ENCODE measurements at regions of chr17 and their contacts with region 1.

Region 1: GRCh38 chr17:17280613-17281549 is at the start of gene COPS3:
- DNase-seq: peak; percentile 95
- ATAC-seq: peak; percentile 87
- H3K4me3 Mint-ChIP-seq: peak within 1 kb of the TSS; percentile 80
- H3K27ac Mint-ChIP-seq: peak within 1 kb of the TSS; percentile 89
- H3K4me1 Mint-ChIP-seq: peaks cover 42% of the 10 kb centered on the region
- H3K27me3 Mint-ChIP-seq: no peaks in the 10 kb centered on the region
- CTCF ChIP-seq: no peak
- total RNA-seq, gene COPS3: 71.6 and 73.7 TPM in 2 replicates

Region 2: DNA sequence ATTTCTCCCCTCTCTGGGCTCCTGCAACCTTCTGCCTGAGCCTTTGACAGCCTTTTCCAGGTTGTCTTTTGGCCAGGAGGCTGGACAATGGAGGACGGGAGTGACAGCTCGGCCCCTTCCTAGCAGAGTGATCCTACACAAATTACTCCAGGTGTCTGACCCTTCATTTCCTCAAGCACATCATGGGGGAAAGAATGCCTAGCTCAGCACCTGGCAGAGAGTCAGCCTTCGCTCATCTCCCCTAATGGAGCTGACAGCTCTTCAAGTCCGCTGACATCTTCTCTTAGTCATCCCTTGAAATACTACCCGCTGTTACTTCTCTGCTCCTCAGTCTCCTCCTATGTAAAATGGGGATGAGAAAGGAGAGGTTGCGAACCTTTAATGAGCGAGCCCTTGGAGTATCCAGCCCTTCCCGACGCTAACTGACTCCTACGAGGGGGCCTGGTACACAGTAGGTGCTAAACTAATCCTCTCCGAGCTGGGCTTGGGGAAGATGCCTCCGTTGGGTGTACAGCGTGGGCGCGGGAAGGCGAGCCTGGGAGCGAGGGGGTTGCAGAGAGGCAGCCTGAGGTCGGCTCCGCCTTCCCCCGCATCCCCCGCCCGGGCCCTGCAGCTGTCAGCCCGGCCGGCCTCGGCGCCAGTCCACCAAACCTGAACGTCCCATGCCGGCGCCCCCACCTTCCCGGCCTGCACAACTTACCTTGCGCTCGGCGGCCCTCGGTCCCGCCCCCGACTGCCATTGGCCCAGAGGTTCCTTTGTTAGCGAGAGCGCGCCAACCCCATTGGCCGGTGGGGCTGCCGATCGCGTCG is 239.1 kb before region 1 on chr17:
- CTCF ChIA-PET with region 1: no interaction called
- POLR2A ChIA-PET with region 1: no interaction called
- intact Hi-C with region 1: loop called (anchors 2 kb)
- DNase-seq: peak; percentile 94
- ATAC-seq: peak; percentile 93
- H3K4me3 Mint-ChIP-seq: peak overlapping the region; percentile 69
- H3K27ac Mint-ChIP-seq: no peak overlapping the region
- H3K4me1 Mint-ChIP-seq: peaks cover 48% of the 10 kb centered on the region
- H3K27me3 Mint-ChIP-seq: no peaks in the 10 kb centered on the region
- CTCF ChIP-seq: no peak

Region 3: DNA sequence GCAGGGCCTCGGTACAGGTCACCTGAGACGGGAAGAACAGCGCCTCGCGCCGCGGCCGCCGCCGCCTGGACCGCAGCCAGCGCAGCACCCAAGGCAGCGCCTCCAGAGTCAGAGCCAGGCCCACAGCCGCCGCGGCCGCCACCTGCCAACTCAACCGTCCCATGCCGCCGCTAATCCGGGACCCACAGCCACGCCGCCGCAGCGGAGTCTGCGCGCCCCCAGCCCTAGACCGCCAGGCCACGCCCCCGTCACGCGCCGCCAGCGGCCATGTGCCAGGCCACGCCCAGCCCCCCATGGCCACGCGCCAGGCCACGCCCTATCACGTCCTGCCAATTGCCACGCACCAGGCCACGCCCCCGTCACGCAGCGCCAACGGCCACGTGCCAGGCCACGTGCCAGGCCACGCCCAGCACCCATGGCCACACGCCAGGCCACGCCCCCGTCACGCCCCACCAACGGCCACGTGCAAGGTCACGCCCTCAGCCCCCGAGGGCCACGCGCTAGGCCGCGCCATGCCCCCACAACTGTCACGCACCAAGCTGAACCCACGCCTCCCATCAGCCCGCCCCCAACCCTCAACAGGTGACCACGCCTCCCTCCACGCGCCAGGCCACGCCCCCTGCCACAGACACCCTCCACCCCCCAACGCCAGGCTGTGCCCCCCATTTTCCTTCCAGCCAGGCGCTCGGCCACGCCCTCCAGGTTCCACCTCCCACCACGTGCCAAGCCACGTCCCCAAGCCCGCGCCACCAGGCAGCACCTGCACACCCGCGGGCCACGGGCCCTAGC is 74.6 kb before region 1 on chr17 and contains the start of gene PLD6:
- CTCF ChIA-PET with region 1: no interaction called
- POLR2A ChIA-PET with region 1: no interaction called
- intact Hi-C with region 1: loop called (anchors 1 kb)
- DNase-seq: peak; percentile 84
- ATAC-seq: peak; percentile 81
- H3K4me3 Mint-ChIP-seq: peak within 1 kb of the TSS; percentile 87
- H3K27ac Mint-ChIP-seq: peak within 1 kb of the TSS; percentile 83
- H3K4me1 Mint-ChIP-seq: peaks cover 23% of the 10 kb centered on the region
- H3K27me3 Mint-ChIP-seq: no peaks in the 10 kb centered on the region
- CTCF ChIP-seq: no peak
- total RNA-seq, gene PLD6: 6.2 and 7.6 TPM in 2 replicates

Region 4: GRCh38 chr17:17303010-17303846 is 22.3 kb after region 1 on chr17 and contains the start of gene NT5M:
- CTCF ChIA-PET with region 1: interaction called, 3 read pairs
- POLR2A ChIA-PET with region 1: interaction called, 3 read pairs
- intact Hi-C with region 1: loop called (anchors 1 kb)
- DNase-seq: peak; percentile 73
- ATAC-seq: peak; percentile 76
- H3K4me3 Mint-ChIP-seq: peak within 1 kb of the TSS; percentile 87
- H3K27ac Mint-ChIP-seq: peak within 1 kb of the TSS; percentile 61
- H3K4me1 Mint-ChIP-seq: peaks cover 34% of the 10 kb centered on the region
- H3K27me3 Mint-ChIP-seq: no peaks in the 10 kb centered on the region
- CTCF ChIP-seq: no peak
- total RNA-seq, gene NT5M: 0.71 and 0.93 TPM in 2 replicates

Region 5: DNA sequence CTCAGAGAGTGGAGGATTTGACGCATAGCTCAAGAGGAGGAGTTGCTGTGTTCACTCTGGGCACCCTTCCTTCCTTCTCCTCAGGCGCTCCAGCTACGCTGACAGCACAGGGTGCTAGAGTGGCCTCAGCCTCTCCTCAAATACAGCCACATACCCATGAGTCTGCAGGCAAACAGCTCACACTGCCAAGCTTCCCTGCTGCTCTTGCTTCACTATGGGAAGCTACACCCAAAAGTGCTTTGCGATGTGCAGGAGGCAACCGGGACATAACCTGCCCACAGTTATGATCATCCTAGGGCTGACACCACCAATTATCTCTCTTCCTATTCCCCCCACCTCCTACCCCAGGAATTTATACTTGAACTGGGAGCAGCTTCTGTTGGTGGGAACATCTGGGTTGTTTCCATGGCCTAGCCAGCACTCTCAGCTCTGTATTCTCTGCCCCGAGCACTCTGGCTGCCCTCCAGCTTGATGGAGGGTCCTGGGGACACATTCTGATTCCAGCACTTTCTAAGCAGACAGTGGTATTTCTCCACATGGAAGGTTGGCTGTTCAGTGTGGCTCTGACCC is 596.2 kb after region 1 on chr17:
- CTCF ChIA-PET with region 1: no interaction called
- POLR2A ChIA-PET with region 1: no interaction called
- intact Hi-C with region 1: no loop called
- DNase-seq: no peak
- ATAC-seq: no peak
- H3K4me3 Mint-ChIP-seq: no peak overlapping the region
- H3K27ac Mint-ChIP-seq: no peak overlapping the region
- H3K4me1 Mint-ChIP-seq: no peaks in the 10 kb centered on the region
- H3K27me3 Mint-ChIP-seq: no peaks in the 10 kb centered on the region
- CTCF ChIP-seq: no peak